WTC11 (cell line): ENCODE measurements at regions of chr6 and their contacts with region 1.

Region 1: GRCh38 chr6:36863670-36864540 is 10.7 kb downstream of the PPIL1 start:
- DNase-seq: no peak
- ATAC-seq: no peak
- H3K4me3 Mint-ChIP-seq: no peak overlapping the region
- H3K27ac Mint-ChIP-seq: peak overlapping the region; percentile 39; the same call in 1 of the 2 replicates
- H3K4me1 Mint-ChIP-seq: peaks cover 44% of the 10 kb centered on the region
- H3K27me3 Mint-ChIP-seq: no peaks in the 10 kb centered on the region
- CTCF ChIP-seq: no peak

Region 2: DNA sequence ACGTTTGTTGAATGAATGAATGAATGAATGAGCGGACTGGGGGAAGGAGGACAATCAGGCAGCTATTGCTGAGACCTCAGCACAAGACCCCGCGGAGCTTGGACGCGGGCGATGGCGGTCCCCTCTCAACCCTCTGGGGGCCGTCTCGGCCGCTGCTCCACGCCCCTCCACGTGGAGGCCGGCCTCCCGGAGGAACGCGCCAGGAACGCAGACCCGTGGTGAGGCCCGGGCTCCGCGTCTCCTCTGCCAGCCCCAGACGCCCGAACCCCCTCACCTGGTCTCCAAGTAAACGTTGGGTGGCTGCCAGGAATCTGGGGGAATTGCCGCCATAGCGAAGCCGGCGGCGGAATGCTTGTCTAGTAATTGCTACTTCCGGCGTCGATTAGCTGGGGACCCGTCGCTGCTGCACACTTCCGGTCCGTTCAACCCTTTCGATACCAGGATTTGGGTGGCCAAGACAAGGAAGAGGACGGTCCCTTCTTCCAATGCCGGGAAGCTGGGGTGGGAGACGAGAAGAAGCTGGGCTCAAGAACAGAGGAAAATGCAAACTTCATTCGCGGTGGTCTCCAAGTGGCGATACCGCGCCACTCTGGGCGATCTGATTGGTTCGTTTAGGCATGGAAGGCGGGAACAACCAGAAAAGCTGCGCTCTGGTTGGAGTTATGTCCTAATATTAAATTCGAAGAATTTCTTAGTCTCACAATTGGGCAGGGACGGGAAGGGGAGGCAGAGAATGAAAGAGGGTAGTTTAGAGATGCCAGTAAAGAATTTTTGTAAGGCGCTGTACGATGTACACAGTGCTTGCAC is 10.7 kb after region 1 on chr6 and contains the start of gene PPIL1:
- CTCF ChIA-PET with region 1: interaction called, 10 read pairs
- POLR2A ChIA-PET with region 1: interaction called, 4 read pairs
- DNase-seq: peak; percentile 74
- ATAC-seq: peak; percentile 87
- H3K4me3 Mint-ChIP-seq: peak within 1 kb of the TSS; percentile 93
- H3K27ac Mint-ChIP-seq: peak within 1 kb of the TSS; percentile 100
- H3K4me1 Mint-ChIP-seq: peaks cover 19% of the 10 kb centered on the region
- H3K27me3 Mint-ChIP-seq: peaks cover 17% of the 10 kb centered on the region
- CTCF ChIP-seq: no peak
- total RNA-seq, gene PPIL1: 64.2 to 69.8 TPM (median 66.6 TPM) in 3 replicates